HepG2 (cell line): ENCODE measurements at regions of chr2 and their contacts with region 1.

Region 1: GRCh38 chr2:158456309-158457066 is at the starts of genes CCDC148 and PKP4:
- DNase-seq: peak; percentile 94
- ATAC-seq: peak; percentile 84
- H3K4me3 ChIP-seq: peak within 1 kb of the TSS; percentile 84 to 100 (median 97)
- H3K27ac ChIP-seq: peak within 1 kb of the TSS; percentile 97
- H3K4me1 ChIP-seq: peaks cover 55% of the 10 kb centered on the region
- H3K27me3 ChIP-seq: no peaks in the 10 kb centered on the region; a peak in 1 of 5 replicates
- CTCF ChIP-seq: peak; percentile 44; the same call in 1 of the 2 replicates
- EP300 ChIP-seq: peak in 1 of 2 experiments; percentile 7; a peak in 1 of 4 replicates
- POLR2A ChIP-seq: peak in 1 of 2 experiments; percentile 50; a peak in 1 of 4 replicates
- RAD21 ChIP-seq: no peak
- total RNA-seq, gene CCDC148: 0.49 and 0.73 TPM in 2 replicates
- total RNA-seq, gene PKP4: 80.9 and 84.8 TPM in 2 replicates

Region 2: GRCh38 chr2:158045362-158045761 is 411.1 kb before region 1 on chr2:
- CTCF ChIA-PET with region 1: no interaction called
- POLR2A ChIA-PET with region 1: no interaction called
- in situ Hi-C with region 1: loop called (anchors 5 kb)
- intact Hi-C with region 1: no loop called
- DNase-seq: peak; percentile 68
- ATAC-seq: peak; percentile 99
- H3K4me3 ChIP-seq: no peak overlapping the region
- H3K27ac ChIP-seq: no peak overlapping the region
- H3K4me1 ChIP-seq: peaks cover 19% of the 10 kb centered on the region
- H3K27me3 ChIP-seq: peaks cover 0 to 16% of the 10 kb centered on the region in 2 experiments; a peak in 2 of 5 replicates
- CTCF ChIP-seq: peak; percentile 90
- EP300 ChIP-seq: no peak
- POLR2A ChIP-seq: no peak
- RAD21 ChIP-seq: peak; percentile 91

Region 3: DNA sequence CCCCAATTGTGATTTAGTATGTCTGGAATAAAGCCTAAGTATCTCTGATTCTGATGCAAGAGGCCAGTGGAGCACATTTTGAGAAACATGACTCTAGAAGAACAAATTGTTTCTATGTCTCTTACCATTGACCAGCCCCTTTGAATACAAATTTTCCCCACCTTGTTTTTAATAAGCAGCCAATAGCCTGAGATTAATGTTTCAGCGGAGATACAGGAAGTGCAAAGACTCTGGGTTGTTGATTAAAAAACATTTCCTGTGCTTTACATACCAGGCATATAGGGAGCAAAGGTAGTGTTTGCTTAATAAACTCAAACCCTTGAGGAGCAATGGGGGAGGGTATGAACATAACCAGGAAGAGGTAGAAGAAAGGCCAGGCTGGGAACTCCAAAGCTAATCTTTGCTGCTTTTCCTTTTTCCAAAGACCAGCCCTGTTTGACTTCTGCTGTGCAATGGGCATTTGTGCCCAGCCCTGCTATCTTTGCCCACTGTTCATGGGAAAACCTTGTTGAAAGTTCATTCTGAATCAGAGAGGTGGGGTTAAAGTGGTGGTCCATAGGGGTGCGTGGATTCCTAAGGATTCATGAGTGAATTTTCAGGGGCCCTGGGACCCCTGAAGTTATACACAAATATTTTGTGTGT is 325.5 kb before region 1 on chr2:
- CTCF ChIA-PET with region 1: no interaction called
- POLR2A ChIA-PET with region 1: interaction called, 23 read pairs
- in situ Hi-C with region 1: no loop called
- intact Hi-C with region 1: loop called (anchors 1 kb)
- DNase-seq: peak; percentile 96
- ATAC-seq: peak; percentile 56
- H3K4me3 ChIP-seq: peak overlapping the region in 2 of 3 experiments; percentile 35 to 56; a peak in 5 of 6 replicates
- H3K27ac ChIP-seq: peak overlapping the region; percentile 98
- H3K4me1 ChIP-seq: peaks cover 98% of the 10 kb centered on the region
- H3K27me3 ChIP-seq: no peaks in the 10 kb centered on the region
- CTCF ChIP-seq: no peak
- EP300 ChIP-seq: peak; percentile 20 to 100; a peak in 3 of 4 replicates
- POLR2A ChIP-seq: no peak; a peak in 1 of 4 replicates
- RAD21 ChIP-seq: no peak; the same call in 1 of the 2 replicates

Region 4: GRCh38 chr2:158184556-158185343 is 271.7 kb before region 1 on chr2:
- CTCF ChIA-PET with region 1: no interaction called
- POLR2A ChIA-PET with region 1: interaction called, 10 read pairs
- in situ Hi-C with region 1: loop called (anchors 5 kb)
- intact Hi-C with region 1: loop called (anchors 1 kb)
- DNase-seq: peak; percentile 97
- ATAC-seq: peak; percentile 98
- H3K4me3 ChIP-seq: no peak overlapping the region; a peak in 1 of 6 replicates
- H3K27ac ChIP-seq: peak overlapping the region; percentile 28
- H3K4me1 ChIP-seq: peaks cover 97% of the 10 kb centered on the region
- H3K27me3 ChIP-seq: no peaks in the 10 kb centered on the region
- CTCF ChIP-seq: no peak
- EP300 ChIP-seq: peak in 1 of 2 experiments; percentile 89; a peak in 2 of 4 replicates
- POLR2A ChIP-seq: no peak
- RAD21 ChIP-seq: no peak

Region 5: DNA sequence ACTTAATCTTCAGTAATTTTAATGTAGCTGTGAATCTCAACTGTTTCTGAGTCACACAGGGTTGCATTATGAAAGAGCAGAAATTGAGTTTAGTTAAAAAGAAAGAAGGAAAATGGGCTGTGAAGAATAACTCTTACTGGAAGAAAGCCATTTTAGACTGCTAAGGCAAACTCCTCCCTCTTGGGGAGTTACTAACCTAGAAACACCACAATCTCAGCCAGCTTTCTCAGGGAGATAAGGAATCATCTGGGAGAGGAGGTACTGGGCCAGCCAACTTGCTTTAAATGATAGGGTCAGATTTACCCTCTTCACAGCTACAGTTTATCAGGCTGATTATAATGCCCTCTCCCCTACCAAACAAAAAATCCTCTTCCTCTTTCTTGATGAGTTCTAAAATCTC is 119.5 kb before region 1 on chr2:
- CTCF ChIA-PET with region 1: no interaction called
- POLR2A ChIA-PET with region 1: no interaction called
- in situ Hi-C with region 1: no loop called
- intact Hi-C with region 1: no loop called
- DNase-seq: no peak
- ATAC-seq: no peak
- H3K4me3 ChIP-seq: no peak overlapping the region
- H3K27ac ChIP-seq: no peak overlapping the region
- H3K4me1 ChIP-seq: no peaks in the 10 kb centered on the region
- H3K27me3 ChIP-seq: 0 out of 5 replicates have a peak, but pooled peaks cover 0 to 2% of the 10 kb centered on the region in 2 experiments
- CTCF ChIP-seq: no peak
- EP300 ChIP-seq: no peak
- POLR2A ChIP-seq: no peak
- RAD21 ChIP-seq: no peak

Region 6: GRCh38 chr2:158497486-158497885 is 41.0 kb after region 1 on chr2:
- CTCF ChIA-PET with region 1: no interaction called
- POLR2A ChIA-PET with region 1: interaction called, 12 read pairs
- in situ Hi-C with region 1: no loop called
- intact Hi-C with region 1: loop called (anchors 5 kb)
- DNase-seq: peak; percentile 55
- ATAC-seq: peak; percentile 74
- H3K4me3 ChIP-seq: no peak overlapping the region
- H3K27ac ChIP-seq: peak overlapping the region; percentile 1
- H3K4me1 ChIP-seq: peaks cover 51% of the 10 kb centered on the region
- H3K27me3 ChIP-seq: no peaks in the 10 kb centered on the region
- CTCF ChIP-seq: no peak
- EP300 ChIP-seq: 0 out of 4 replicates have a peak, but pooled peaks of 1 of the 2 experiments have one; percentile 20
- POLR2A ChIP-seq: no peak
- RAD21 ChIP-seq: no peak

Region 7: DNA sequence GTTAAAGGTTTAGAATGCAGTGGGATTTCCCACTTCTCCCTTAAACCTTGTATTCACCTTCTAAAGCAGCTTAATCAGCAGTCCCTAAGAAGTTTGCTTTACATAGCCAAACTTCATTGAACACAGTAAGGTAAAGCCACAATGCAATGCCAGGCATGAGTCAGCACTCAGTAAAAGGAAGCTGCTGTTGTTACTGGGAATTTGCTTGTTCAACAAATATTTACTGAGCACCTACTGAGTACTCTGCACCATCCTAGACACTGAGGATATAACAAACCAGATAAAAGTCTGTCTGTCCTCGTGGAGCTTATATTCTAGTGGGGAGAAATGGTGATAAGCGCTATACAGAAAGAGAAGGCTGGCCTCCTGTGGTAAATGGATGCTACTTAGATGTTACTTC is 163.0 kb after region 1 on chr2:
- CTCF ChIA-PET with region 1: no interaction called
- POLR2A ChIA-PET with region 1: interaction called, 5 read pairs
- in situ Hi-C with region 1: no loop called
- intact Hi-C with region 1: loop called (anchors 5 kb)
- DNase-seq: peak; percentile 70
- ATAC-seq: peak; percentile 82
- H3K4me3 ChIP-seq: no peak overlapping the region
- H3K27ac ChIP-seq: peak overlapping the region; percentile 47
- H3K4me1 ChIP-seq: peaks cover 22% of the 10 kb centered on the region
- H3K27me3 ChIP-seq: no peaks in the 10 kb centered on the region
- CTCF ChIP-seq: no peak
- EP300 ChIP-seq: peak in 1 of 2 experiments; percentile 56; a peak in 1 of 4 replicates
- POLR2A ChIP-seq: no peak
- RAD21 ChIP-seq: no peak